ENCODE measurements at regions of chr21 and their contacts with region 1.

Region 1: DNA sequence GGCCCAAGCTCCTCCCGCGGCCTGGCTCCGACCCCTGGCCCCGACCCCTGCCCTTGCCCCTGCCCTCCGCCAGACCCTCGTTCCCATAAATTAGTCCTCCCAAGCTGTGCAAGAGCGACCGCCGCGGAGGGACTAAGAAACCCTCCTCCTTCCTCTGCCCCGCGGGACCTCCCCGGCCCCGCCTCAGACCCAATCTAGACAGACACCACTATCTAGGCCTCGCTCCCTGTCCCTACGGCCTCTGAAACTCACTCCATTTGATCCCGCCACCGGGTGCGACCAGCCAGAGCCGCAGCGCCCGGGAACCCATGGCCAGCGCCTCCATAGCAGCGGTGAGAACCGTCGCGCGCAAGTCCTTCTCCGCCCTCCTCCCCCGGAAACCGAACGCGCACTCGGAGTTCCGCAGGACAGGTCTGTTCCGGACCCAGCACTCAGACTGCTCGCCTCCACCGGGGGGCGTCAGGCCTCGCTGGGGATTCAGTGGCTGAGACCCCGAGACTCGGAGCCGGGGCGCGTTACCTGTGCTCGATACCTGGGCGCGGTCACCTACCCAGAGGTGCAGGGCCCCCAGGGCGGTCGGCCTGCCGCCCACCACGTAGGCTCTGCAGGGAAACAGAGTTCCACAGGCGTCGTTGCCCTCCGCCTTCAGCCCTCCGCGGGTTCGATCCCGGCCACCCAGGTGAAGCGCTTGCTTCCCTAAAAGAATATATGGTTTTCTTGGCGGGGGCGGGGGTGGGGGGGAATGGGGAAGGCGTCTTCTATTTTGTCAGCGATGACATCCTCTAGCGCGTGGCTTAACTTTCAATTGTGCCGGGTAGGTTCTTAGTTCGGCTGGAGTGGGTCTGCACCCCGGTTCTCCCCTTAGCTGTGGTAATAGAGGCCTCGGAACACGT is at the start of gene MRPL39:
- DNase-seq: peak; percentile 79 to 83
- H3K4me3 ChIP-seq: peak within 1 kb of the TSS; percentile 58 to 95
- H3K27ac ChIP-seq: peak within 1 kb of the TSS; percentile 80 to 82
- H3K4me1 ChIP-seq: peaks cover 9 to 10% of the 10 kb centered on the region in 2 donors
- H3K27me3 ChIP-seq: no peaks in the 10 kb centered on the region
- CTCF ChIP-seq: peak; percentile 52 to 57 (median 55)
- POLR2A ChIP-seq: peak in 1 of 2 donors; percentile 23
- total RNA-seq, gene MRPL39: 10.3 to 55.1 (median 21.6) TPM

Region 2: DNA sequence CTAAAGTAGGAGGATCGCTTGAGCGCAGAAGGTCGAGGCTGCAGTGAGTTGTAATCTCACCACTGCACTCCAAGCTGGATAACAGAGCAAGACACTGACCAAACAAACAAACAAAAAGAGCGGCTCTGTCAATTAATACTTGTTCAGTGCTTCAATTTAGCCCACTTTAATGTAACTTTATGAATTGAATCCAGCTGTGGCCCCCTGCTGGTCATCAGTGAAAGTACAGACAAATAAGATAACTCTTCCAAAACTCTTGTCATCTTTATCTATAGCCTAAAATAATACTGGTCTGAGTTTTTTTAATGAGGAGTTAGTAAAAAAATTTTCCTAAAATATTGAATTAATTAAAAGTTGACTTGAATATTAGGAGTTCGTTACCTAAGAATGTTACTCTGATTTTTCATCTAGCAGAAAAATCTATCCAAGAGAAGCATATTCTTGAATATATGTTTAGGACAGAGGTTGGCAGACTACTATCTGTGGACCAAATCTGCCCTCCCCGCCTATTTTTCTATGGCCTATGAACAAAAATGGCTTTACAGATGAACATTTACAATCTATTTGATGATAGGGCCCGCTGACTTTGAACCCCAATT is 101.2 kb after region 1 on chr21:
- intact Hi-C with region 1: loop called (anchors 5 kb)
- DNase-seq: peak; percentile 22 to 51
- H3K4me3 ChIP-seq: no peak overlapping the region
- H3K27ac ChIP-seq: no peak overlapping the region
- H3K4me1 ChIP-seq: no peaks in the 10 kb centered on the region
- H3K27me3 ChIP-seq: no peaks in the 10 kb centered on the region
- CTCF ChIP-seq: peak; percentile 76 to 82 (median 79)
- POLR2A ChIP-seq: no peak

Measured in uterus (tissue), 4 donors.